GM13976 (cell line): ENCODE measurements at regions of chr13 and their contacts with region 1.

Region 1: GRCh38 chr13:91722267-91722884 is 324.0 kb downstream of the GPC5 start:
- DNase-seq: peak; percentile 16
- CTCF ChIP-seq: peak; percentile 28

Region 2: GRCh38 chr13:91381371-91381770 is 341.0 kb before region 1 on chr13:
- in situ Hi-C with region 1: loop called (anchors 10 kb)
- DNase-seq: no peak
- CTCF ChIP-seq: peak; percentile 18